ENCODE measurements at regions of chr1 and their contacts with region 1.

Region 1: DNA sequence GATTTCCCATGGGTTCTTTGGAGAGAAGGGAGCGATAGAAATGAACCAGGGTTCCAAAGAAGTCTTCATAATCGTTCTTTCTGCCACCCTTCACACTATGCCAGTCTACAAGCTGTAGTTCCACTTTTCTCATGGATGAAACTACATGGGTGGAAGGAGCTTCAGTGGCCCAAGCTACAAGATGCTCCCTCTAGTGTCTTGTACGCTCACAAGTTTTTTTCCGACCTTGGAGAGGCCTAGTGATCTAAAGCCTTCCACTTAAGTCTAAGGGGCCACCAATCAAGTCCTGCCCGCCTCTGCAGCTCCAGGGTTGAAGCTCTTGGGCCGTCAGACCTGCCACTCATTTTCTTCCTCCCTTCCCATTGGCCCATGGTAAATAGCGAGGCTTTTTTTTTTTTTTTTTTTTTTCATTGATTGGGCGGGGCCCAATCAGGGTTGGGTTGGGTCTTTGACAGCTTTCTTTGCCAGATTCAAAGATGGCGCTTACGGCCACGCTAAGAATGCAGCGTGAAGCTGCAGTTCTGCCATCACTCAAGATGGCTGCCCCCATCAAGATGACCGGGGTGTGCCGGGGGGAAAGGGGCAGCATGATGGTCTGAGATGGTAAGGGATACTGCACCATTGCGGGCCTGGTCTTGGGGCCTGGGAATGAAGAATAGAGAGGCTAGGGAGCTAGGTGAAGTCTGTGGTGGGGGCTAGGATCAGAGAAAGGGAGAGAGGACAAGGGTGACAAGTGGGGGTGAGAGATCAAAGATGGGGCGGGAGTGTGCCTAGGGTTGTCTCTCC is at the start of gene TOMM40L:
- DNase-seq: peak; percentile 84 to 98
- H3K4me3 ChIP-seq: peak within 1 kb of the TSS; percentile 65 to 83 (median 78)
- H3K27ac ChIP-seq: peak within 1 kb of the TSS; percentile 52 to 84 (median 79)
- H3K4me1 ChIP-seq: peaks cover 16 to 42% (median 29%) of the 10 kb centered on the region in 4 donors
- H3K27me3 ChIP-seq: no peaks in the 10 kb centered on the region
- CTCF ChIP-seq: peak in 4 of 7 experiments; percentile 18 to 49 (median 35)
- EP300 ChIP-seq: no peak
- POLR2A ChIP-seq: no peak
- total RNA-seq, gene TOMM40L: 0.58 to 7.3 (median 5.8) TPM

Region 2: GRCh38 chr1:161382214-161383019 is 156.7 kb after region 1 on chr1:
- intact Hi-C with region 1: loop called (anchors 5 kb)
- DNase-seq: peak in 1 of 2 donors; percentile 81
- H3K4me3 ChIP-seq: no peak overlapping the region
- H3K27ac ChIP-seq: peak overlapping the region in 4 of 5 donors; percentile 44 to 66 (median 57)
- H3K4me1 ChIP-seq: peaks cover 11 to 18% (median 14%) of the 10 kb centered on the region in 4 donors
- H3K27me3 ChIP-seq: no peaks in the 10 kb centered on the region
- CTCF ChIP-seq: peak in 4 of 7 experiments; percentile 47 to 75 (median 59)
- EP300 ChIP-seq: no peak
- POLR2A ChIP-seq: no peak

Measured in stomach (tissue), 19 donors.